IMR-90 (cell line): ENCODE measurements at regions of chrX and their contacts with region 1.

Region 1: DNA sequence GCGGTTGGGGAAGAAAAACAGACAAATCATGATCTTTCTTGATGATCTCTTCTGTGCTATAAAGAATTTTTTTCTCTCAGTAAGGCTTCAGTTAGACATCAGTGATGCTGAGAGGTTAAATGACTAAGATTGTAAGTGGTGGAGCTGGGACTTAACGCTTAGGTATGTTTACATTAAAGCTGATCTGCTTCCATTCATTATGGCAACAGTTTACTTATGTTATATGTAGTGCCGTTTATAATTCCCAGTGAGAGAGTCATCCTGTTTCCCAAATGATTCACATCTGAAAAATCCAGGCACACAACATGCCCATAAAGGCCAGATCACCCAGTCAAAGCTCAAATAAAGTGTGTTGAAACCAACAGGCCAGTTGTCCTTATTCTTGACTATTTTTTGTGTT is 50.1 kb downstream of the CENPVL3 start:
- DNase-seq: peak; percentile 91
- ATAC-seq: peak; percentile 93
- H3K4me3 ChIP-seq: no peak overlapping the region
- H3K27ac ChIP-seq: no peak overlapping the region
- H3K4me1 ChIP-seq: peaks cover 3% of the 10 kb centered on the region
- H3K27me3 ChIP-seq: no peaks in the 10 kb centered on the region; the same call in 1 of the 2 replicates
- CTCF ChIP-seq: no peak
- POLR2A ChIP-seq: no peak
- RAD21 ChIP-seq: no peak

Region 2: DNA sequence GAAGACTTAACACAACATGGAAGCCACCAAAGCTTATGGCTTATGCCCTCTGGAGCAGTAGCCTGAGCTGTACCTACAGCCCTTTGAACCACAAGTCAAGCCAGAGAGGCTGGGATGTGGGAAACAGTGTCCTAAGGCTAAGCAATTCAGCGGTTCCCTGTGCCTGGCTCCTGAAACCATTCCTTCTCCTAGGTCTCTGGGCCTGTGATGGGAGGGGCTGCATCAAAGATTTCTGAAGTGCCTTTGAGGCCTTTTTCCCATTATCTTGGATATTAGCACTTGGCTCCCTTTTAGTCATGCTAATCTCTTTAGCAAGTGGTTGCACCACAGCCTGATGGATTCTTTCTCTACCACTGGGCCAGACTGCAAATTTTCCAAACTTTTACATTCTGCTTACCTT is 376.5 kb before region 1 on chrX:
- CTCF ChIA-PET with region 1: no interaction called
- POLR2A ChIA-PET with region 1: no interaction called
- dilution Hi-C with region 1: no loop called
- in situ Hi-C with region 1: no loop called
- intact Hi-C with region 1: no loop called
- DNase-seq: no peak
- ATAC-seq: no peak
- H3K4me3 ChIP-seq: no peak overlapping the region
- H3K27ac ChIP-seq: no peak overlapping the region
- H3K4me1 ChIP-seq: no peaks in the 10 kb centered on the region
- H3K27me3 ChIP-seq: no peaks in the 10 kb centered on the region; the same call in 1 of the 2 replicates
- CTCF ChIP-seq: no peak
- POLR2A ChIP-seq: no peak
- RAD21 ChIP-seq: no peak

Region 3: GRCh38 chrX:51476930-51477329 is 91.7 kb before region 1 on chrX:
- CTCF ChIA-PET with region 1: no interaction called
- POLR2A ChIA-PET with region 1: no interaction called
- dilution Hi-C with region 1: no loop called
- in situ Hi-C with region 1: no loop called
- intact Hi-C with region 1: no loop called
- DNase-seq: no peak
- ATAC-seq: no peak
- H3K4me3 ChIP-seq: no peak overlapping the region
- H3K27ac ChIP-seq: no peak overlapping the region
- H3K4me1 ChIP-seq: no peaks in the 10 kb centered on the region
- H3K27me3 ChIP-seq: no peaks in the 10 kb centered on the region; the same call in none of the 2 replicates
- CTCF ChIP-seq: no peak
- POLR2A ChIP-seq: no peak
- RAD21 ChIP-seq: no peak

Region 4: GRCh38 chrX:51496501-51497291 is 71.9 kb before region 1 on chrX and contains the start of gene NUDT11:
- CTCF ChIA-PET with region 1: no interaction called
- POLR2A ChIA-PET with region 1: no interaction called
- dilution Hi-C with region 1: no loop called
- in situ Hi-C with region 1: no loop called
- intact Hi-C with region 1: loop called (anchors 2 kb)
- DNase-seq: peak; percentile 72
- ATAC-seq: peak; percentile 97
- H3K4me3 ChIP-seq: peak within 1 kb of the TSS; percentile 79
- H3K27ac ChIP-seq: peak within 1 kb of the TSS; percentile 83
- H3K4me1 ChIP-seq: no peaks in the 10 kb centered on the region
- H3K27me3 ChIP-seq: peaks cover 3% of the 10 kb centered on the region; the same call in 1 of the 2 replicates
- CTCF ChIP-seq: no peak
- POLR2A ChIP-seq: no peak; the same call in 1 of the 2 replicates
- RAD21 ChIP-seq: no peak
- total RNA-seq, gene NUDT11: 13.8 and 19.2 TPM in 2 replicates

Region 5: DNA sequence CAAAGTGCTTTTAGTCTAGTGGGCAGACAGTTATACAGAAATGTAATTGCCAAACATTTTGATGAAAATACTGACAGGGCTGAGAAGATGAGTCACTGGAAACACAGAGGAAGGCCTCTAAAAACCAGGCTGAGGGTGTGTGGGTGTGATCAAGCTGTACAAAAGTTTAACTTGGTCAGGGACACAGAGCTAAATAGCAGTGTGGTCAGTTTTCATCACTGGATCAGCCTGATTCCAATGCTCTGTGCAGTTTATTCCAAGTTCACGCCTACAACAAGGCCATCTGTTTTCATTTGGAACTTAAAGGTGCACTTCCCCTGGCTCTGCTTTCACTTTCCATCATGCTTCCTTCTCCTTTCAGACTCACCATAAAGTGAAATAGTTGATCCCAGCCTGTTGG is 39.5 kb after region 1 on chrX:
- CTCF ChIA-PET with region 1: no interaction called
- POLR2A ChIA-PET with region 1: no interaction called
- dilution Hi-C with region 1: no loop called
- in situ Hi-C with region 1: no loop called
- intact Hi-C with region 1: loop called (anchors 2 kb)
- DNase-seq: peak; percentile 1
- ATAC-seq: no peak
- H3K4me3 ChIP-seq: no peak overlapping the region
- H3K27ac ChIP-seq: no peak overlapping the region
- H3K4me1 ChIP-seq: no peaks in the 10 kb centered on the region
- H3K27me3 ChIP-seq: peaks cover 12% of the 10 kb centered on the region
- CTCF ChIP-seq: no peak
- POLR2A ChIP-seq: no peak
- RAD21 ChIP-seq: no peak